Activated CD4-positive, alpha-beta memory T cell treated with anti-CD3 and anti-CD28 coated beads for 36 hours (primary cell): ENCODE measurements at regions of chr1 and their contacts with region 1.

Region 1: GRCh38 chr1:151790071-151790940 is at the start of gene TDRKH:
- DNase-seq: peak; percentile 99
- H3K4me3 Mint-ChIP-seq: peak within 1 kb of the TSS; percentile 96
- H3K27ac Mint-ChIP-seq: peak within 1 kb of the TSS; percentile 84
- H3K4me1 Mint-ChIP-seq: peaks cover 22% of the 10 kb centered on the region
- H3K27me3 Mint-ChIP-seq: peaks cover 2% of the 10 kb centered on the region
- total RNA-seq, gene TDRKH: 30.6 to 32.4 TPM

Region 2: GRCh38 chr1:151739590-151740375 is 50.5 kb before region 1 on chr1:
- CTCF ChIA-PET with region 1: no interaction called
- POLR2A ChIA-PET with region 1: no interaction called
- intact Hi-C with region 1: no loop called
- DNase-seq: no peak
- H3K4me3 Mint-ChIP-seq: no peak overlapping the region
- H3K27ac Mint-ChIP-seq: no peak overlapping the region
- H3K4me1 Mint-ChIP-seq: peaks cover 5% of the 10 kb centered on the region
- H3K27me3 Mint-ChIP-seq: no peaks in the 10 kb centered on the region

Region 3: DNA sequence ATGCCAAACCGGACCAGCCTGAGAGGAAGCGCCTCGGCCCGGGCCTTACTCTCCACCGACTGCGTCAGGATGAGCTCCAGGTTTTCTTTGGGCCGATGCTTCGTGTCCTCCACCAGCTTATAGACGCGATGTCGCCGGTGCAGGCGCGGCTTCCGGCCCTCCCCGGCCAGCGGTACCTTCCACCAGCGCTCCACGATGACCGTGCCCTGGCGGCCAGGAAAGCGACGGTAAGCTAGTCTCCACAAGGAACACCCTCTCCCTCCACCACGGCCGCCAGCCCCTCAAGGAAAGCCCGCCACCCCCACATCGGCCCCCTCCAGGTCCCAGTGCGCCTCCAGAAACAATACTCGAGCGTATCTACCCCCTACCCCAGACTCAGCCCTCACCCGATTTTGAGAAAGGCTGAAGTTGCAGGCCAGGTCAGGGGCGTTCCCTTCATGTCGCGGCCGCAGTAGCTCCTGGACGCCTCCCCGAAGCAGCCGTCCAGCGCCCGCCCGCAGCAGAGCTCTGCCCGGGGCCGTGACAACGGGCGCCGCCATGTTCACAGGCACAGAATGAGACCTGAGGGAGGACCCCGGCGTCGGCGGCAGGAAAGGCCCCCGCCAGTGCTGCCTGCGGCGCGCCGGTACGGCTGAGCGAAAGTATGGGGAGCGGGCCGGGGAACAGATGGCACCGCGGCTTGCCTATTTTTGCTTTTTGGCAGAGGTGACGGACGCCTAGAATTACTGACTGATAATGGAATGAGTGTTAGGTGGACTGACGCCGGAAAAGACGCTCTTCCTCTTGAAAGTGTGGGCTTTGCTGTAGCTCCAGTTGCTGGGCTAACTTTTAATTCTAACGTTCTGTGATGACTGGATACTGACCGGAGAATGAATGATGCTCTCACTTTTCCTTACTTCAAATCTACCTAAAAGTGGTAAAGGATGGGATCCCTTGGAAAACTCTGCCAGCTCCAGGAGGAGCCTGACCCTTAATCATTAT is 27.1 kb before region 1 on chr1 and contains the start of gene MRPL9:
- CTCF ChIA-PET with region 1: interaction called, 5 read pairs
- POLR2A ChIA-PET with region 1: interaction called, 21 read pairs
- intact Hi-C with region 1: loop called (anchors 1 kb)
- DNase-seq: peak; percentile 93
- H3K4me3 Mint-ChIP-seq: peak within 1 kb of the TSS; percentile 78
- H3K27ac Mint-ChIP-seq: peak within 1 kb of the TSS; percentile 86
- H3K4me1 Mint-ChIP-seq: peaks cover 16% of the 10 kb centered on the region
- H3K27me3 Mint-ChIP-seq: no peaks in the 10 kb centered on the region
- total RNA-seq, gene MRPL9: 135 to 154 TPM

Region 4: GRCh38 chr1:151820940-151821339 is 30.6 kb after region 1 on chr1:
- CTCF ChIA-PET with region 1: no interaction called
- POLR2A ChIA-PET with region 1: interaction called, 19 read pairs
- intact Hi-C with region 1: no loop called
- DNase-seq: peak; percentile 55
- H3K4me3 Mint-ChIP-seq: peak overlapping the region; percentile 36
- H3K27ac Mint-ChIP-seq: peak overlapping the region; percentile 85
- H3K4me1 Mint-ChIP-seq: peaks cover 67% of the 10 kb centered on the region
- H3K27me3 Mint-ChIP-seq: no peaks in the 10 kb centered on the region

Region 5: DNA sequence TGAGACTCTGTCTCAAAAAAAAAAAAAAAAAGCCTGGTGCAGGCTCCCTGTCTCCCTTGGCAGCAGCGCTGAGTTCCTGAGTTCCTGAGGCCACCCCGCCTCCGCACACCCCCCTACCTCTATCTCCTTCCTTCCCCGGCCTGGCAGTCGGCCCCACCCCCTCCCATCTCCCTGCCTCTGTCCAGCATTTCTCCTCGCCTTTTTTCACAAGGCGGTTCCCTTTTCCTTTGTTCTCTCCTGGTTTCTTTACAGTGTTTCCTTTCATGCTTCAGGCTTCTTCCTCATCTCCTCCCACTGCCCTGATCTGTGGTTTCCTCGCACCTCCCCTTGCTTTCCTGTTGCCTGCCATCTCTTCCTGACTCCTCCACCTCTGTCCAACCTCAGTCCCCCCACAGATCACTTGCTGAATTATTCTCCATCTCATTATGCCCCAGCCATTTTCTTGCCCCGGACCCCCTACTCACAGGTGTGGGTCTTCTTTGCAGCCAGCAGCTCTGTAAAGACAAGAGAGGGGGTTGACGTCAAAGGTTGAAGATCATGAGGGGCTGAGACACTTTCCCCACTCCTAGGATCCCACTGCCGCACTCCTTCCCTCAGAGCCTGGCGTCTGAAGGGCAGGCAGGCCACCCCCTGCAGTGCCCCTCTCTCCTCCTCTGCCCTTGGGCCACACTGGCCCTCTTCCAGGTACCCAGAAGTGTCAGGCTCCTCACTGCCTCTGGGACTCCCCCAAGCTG is 38.8 kb after region 1 on chr1:
- CTCF ChIA-PET with region 1: interaction called, 8 read pairs
- POLR2A ChIA-PET with region 1: interaction called, 9 read pairs
- intact Hi-C with region 1: loop called (anchors 2 kb)
- DNase-seq: no peak
- H3K4me3 Mint-ChIP-seq: peak overlapping the region; percentile 22
- H3K27ac Mint-ChIP-seq: peak overlapping the region; percentile 86
- H3K4me1 Mint-ChIP-seq: peaks cover 69% of the 10 kb centered on the region
- H3K27me3 Mint-ChIP-seq: no peaks in the 10 kb centered on the region